OCI-LY7 (cell line): ENCODE measurements at regions of chr1 and their contacts with region 1.

Region 1: GRCh38 chr1:99969729-99970621 is at the start of gene SLC35A3:
- DNase-seq: peak; percentile 92
- H3K4me3 ChIP-seq: peak within 1 kb of the TSS; percentile 91
- H3K27ac ChIP-seq: peak within 1 kb of the TSS; percentile 74
- H3K4me1 ChIP-seq: peaks cover 19% of the 10 kb centered on the region
- CTCF ChIP-seq: no peak
- total RNA-seq, gene SLC35A3: 15.9 and 26.8 TPM in 2 replicates

Region 2: GRCh38 chr1:99808391-99809115 is 161.4 kb before region 1 on chr1:
- CTCF ChIA-PET with region 1: no interaction called
- POLR2A ChIA-PET with region 1: interaction called, 3 read pairs
- intact Hi-C with region 1: loop called (anchors 5 kb)
- DNase-seq: peak; percentile 84
- H3K4me3 ChIP-seq: no peak overlapping the region
- H3K27ac ChIP-seq: no peak overlapping the region
- H3K4me1 ChIP-seq: peaks cover 5% of the 10 kb centered on the region
- CTCF ChIP-seq: peak; percentile 87

Region 3: GRCh38 chr1:99849744-99850458 is 120.1 kb before region 1 on chr1 and contains the start of gene AGL:
- CTCF ChIA-PET with region 1: no interaction called
- POLR2A ChIA-PET with region 1: interaction called, 4 read pairs
- intact Hi-C with region 1: loop called (anchors 1 kb)
- DNase-seq: peak; percentile 93
- H3K4me3 ChIP-seq: peak within 1 kb of the TSS; percentile 81
- H3K27ac ChIP-seq: peak within 1 kb of the TSS; percentile 56
- H3K4me1 ChIP-seq: peaks cover 30% of the 10 kb centered on the region
- CTCF ChIP-seq: no peak
- total RNA-seq, gene AGL: 11.6 and 12.2 TPM in 2 replicates

Region 4: DNA sequence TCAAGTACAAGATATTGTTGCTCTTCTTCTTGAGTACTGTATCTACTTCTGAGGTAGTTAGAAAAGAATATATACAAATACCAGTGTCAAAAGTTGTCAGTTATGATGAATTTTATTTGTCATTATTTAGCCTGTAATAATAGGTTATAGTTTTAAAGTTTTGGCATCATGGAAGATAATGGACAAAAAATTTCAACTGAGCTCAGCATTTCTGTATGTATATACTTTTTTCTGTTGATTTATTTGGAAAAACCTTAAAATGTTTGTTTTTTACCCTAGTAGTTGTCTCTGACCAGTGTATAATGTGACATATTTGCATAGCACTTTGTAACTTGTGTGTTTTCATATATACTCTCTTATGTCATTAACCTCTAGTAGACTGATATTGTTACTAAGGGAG is 11.0 kb after region 1 on chr1:
- CTCF ChIA-PET with region 1: interaction called, 3 read pairs
- POLR2A ChIA-PET with region 1: interaction called, 10 read pairs
- intact Hi-C with region 1: no loop called
- DNase-seq: no peak
- H3K4me3 ChIP-seq: no peak overlapping the region
- H3K27ac ChIP-seq: no peak overlapping the region
- H3K4me1 ChIP-seq: no peaks in the 10 kb centered on the region
- CTCF ChIP-seq: no peak